CD14-positive monocyte (primary cell): ENCODE measurements at regions of chr9 and their contacts with region 1.

Region 1: GRCh38 chr9:126516936-126517832 is 96.5 kb upstream of the LMX1B start:
- DNase-seq: peak; percentile 70 to 81 (median 75)
- H3K4me3 ChIP-seq: peak overlapping the region; percentile 46 to 81 (median 49)
- H3K4me3 Mint-ChIP-seq: peak overlapping the region; percentile 84 to 92
- H3K27ac ChIP-seq: peak overlapping the region; percentile 76 to 91
- H3K27ac Mint-ChIP-seq: peak overlapping the region; percentile 85 to 96 (median 91)
- H3K4me1 ChIP-seq: peaks cover 41 to 53% of the 10 kb centered on the region in 2 donors
- H3K4me1 Mint-ChIP-seq: peaks cover 40% of the 10 kb centered on the region
- H3K27me3 ChIP-seq: no peaks in the 10 kb centered on the region
- H3K27me3 Mint-ChIP-seq: no peaks in the 10 kb centered on the region
- CTCF ChIP-seq: no peak

Region 2: DNA sequence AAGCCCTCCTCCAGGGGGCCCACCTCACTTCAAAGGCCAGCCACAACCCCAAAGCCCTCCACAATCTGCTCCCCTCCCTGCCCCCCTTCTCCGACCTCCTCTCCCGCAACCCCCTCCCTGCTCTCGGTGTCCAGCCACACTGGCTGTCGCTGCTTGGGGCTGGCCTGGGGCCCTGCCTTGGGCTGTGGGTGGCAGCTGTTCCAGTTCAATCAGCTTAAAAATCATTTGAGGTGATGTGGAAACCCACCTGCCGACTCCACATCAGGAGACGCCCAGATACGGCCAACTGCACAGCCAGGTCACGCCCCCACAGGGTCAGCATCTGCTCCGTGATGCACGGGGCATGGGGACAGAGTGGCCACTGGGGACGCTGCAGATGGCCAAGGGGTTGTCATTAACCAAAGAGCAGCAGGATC is 297.5 kb before region 1 on chr9:
- intact Hi-C with region 1: no loop called
- DNase-seq: no peak
- H3K4me3 ChIP-seq: no peak overlapping the region
- H3K4me3 Mint-ChIP-seq: no peak overlapping the region
- H3K27ac ChIP-seq: no peak overlapping the region
- H3K27ac Mint-ChIP-seq: no peak overlapping the region
- H3K4me1 ChIP-seq: peaks cover 0 to 3% of the 10 kb centered on the region in 2 donors
- H3K4me1 Mint-ChIP-seq: peaks cover 2% of the 10 kb centered on the region
- H3K27me3 ChIP-seq: peaks cover 18 to 40% of the 10 kb centered on the region in 2 donors
- H3K27me3 Mint-ChIP-seq: peaks cover 36 to 51% (median 41%) of the 10 kb centered on the region in 3 donors
- CTCF ChIP-seq: no peak

Region 3: GRCh38 chr9:126532951-126533925 is 16.1 kb after region 1 on chr9:
- intact Hi-C with region 1: loop called in 1 of 2 experiments (anchors 1 kb)
- DNase-seq: peak; percentile 61 to 77 (median 63)
- H3K4me3 ChIP-seq: peak overlapping the region; percentile 29 to 76 (median 41)
- H3K4me3 Mint-ChIP-seq: peak overlapping the region; percentile 61 to 85
- H3K27ac ChIP-seq: peak overlapping the region; percentile 84 to 88
- H3K27ac Mint-ChIP-seq: peak overlapping the region; percentile 84 to 94 (median 91)
- H3K4me1 ChIP-seq: peaks cover 50 to 51% of the 10 kb centered on the region in 2 donors
- H3K4me1 Mint-ChIP-seq: peaks cover 58% of the 10 kb centered on the region
- H3K27me3 ChIP-seq: no peaks in the 10 kb centered on the region
- H3K27me3 Mint-ChIP-seq: peaks cover 1 to 2% (median 2%) of the 10 kb centered on the region in 3 donors
- CTCF ChIP-seq: no peak

Region 4: DNA sequence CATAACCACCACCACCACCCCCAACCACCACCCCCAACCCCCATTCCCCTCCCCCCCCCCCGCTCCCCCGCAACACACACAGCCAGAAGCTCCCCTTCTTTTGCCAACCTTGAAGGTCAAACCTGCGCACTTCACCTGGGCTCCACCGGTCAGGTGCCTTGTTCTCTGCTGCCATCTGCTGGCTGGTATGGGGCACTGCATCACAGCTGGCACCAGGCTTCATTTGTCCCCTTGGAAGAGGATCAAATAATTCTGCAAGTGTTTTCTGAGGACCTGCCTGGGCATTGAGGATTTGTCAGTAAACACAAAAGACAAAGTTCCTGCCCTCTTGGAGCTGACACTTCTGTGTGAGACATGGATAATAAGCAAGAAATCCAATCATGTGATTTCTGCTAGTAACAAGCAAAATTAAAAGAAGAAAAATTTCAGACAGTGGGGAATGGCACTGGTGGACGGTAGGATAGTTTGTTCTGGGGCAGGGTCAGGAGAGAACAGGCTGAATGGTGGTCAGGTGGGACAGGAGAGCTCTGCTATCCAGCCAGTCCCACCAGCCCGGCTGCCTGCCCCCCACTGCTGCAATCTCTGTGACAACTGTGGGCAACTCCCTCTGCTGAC is 41.0 kb after region 1 on chr9:
- intact Hi-C with region 1: loop called in 1 of 2 experiments (anchors 5 kb)
- DNase-seq: peak; percentile 38 to 60 (median 56)
- H3K4me3 ChIP-seq: no peak overlapping the region
- H3K4me3 Mint-ChIP-seq: no peak overlapping the region
- H3K27ac ChIP-seq: no peak overlapping the region
- H3K27ac Mint-ChIP-seq: peak overlapping the region in 1 of 7 donors; percentile 30
- H3K4me1 ChIP-seq: peaks cover 14 to 16% of the 10 kb centered on the region in 2 donors
- H3K4me1 Mint-ChIP-seq: peaks cover 12% of the 10 kb centered on the region
- H3K27me3 ChIP-seq: no peaks in the 10 kb centered on the region
- H3K27me3 Mint-ChIP-seq: peaks cover 0 to 9% (median 1%) of the 10 kb centered on the region in 3 donors
- CTCF ChIP-seq: peak; percentile 90

Region 5: GRCh38 chr9:126927419-126927818 is 410.2 kb after region 1 on chr9:
- intact Hi-C with region 1: no loop called
- DNase-seq: no peak
- H3K4me3 ChIP-seq: no peak overlapping the region
- H3K4me3 Mint-ChIP-seq: no peak overlapping the region
- H3K27ac ChIP-seq: no peak overlapping the region
- H3K27ac Mint-ChIP-seq: no peak overlapping the region
- H3K4me1 ChIP-seq: no peaks in the 10 kb centered on the region
- H3K4me1 Mint-ChIP-seq: no peaks in the 10 kb centered on the region
- H3K27me3 ChIP-seq: no peaks in the 10 kb centered on the region
- H3K27me3 Mint-ChIP-seq: peaks cover 0 to 2% (median 1%) of the 10 kb centered on the region in 3 donors
- CTCF ChIP-seq: no peak